Naive thymus-derived CD4-positive, alpha-beta T cell (primary cell): ENCODE measurements at regions of chr13 and their contacts with region 1.

Region 1: DNA sequence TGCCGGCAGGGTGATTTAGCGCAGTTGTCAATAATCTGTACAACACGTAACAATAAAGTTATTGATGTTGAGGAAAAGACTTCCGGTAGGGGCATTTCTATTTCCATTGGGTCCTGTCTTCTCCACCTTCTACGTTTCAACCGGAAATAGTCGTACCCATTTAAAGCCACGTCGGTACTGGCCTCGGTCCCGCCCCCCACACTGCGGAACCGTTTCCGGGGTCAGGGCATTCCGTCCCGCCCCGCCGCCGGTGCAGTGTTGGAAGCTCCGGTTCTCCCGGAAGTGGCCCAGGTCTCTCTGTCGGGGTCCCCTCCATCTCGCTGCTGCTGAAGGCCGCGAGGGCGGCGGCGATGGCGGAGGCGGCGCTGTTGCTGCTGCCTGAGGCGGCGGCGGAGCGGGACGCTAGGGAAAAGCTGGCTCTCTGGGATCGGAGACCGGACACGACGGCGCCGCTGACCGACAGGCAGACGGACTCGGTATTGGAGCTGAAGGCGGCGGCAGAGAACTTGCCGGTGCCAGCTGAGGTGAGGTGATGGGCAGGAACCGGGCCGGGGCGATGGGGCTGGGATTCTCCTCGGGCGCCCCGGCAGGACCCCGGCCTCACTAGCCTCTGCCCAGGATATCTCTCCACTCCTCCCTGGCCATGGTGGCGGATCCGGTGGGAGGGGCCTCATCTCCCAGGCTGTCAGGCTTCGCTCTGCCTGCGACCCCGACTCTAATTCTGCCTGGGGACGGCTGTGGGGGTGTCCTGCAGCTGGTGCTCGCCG is at the start of gene COG3:
- DNase-seq: peak; percentile 87 to 97 (median 96)
- ATAC-seq: peak; percentile 98
- H3K4me3 ChIP-seq: peak within 1 kb of the TSS; percentile 49
- H3K4me3 Mint-ChIP-seq: peak within 1 kb of the TSS; percentile 90 to 97 (median 95)
- H3K27ac ChIP-seq: peak within 1 kb of the TSS; percentile 92
- H3K27ac Mint-ChIP-seq: peak within 1 kb of the TSS; percentile 81 to 98 (median 94)
- H3K4me1 ChIP-seq: peaks cover 10 to 28% of the 10 kb centered on the region in 2 donors
- H3K4me1 Mint-ChIP-seq: peaks cover 33 to 74% (median 59%) of the 10 kb centered on the region in 7 donors
- H3K27me3 ChIP-seq: no peaks in the 10 kb centered on the region
- H3K27me3 Mint-ChIP-seq: no peaks in the 10 kb centered on the region
- total RNA-seq, gene COG3: 29.7 to 50.1 (median 43.4) TPM

Region 2: GRCh38 chr13:44988973-44989817 is 475.7 kb before region 1 on chr13 and contains the starts of genes GPALPP1 and NUFIP1:
- CTCF ChIA-PET with region 1: no interaction called
- POLR2A ChIA-PET with region 1: no interaction called
- intact Hi-C with region 1: loop called (anchors 1 to 2 kb)
- DNase-seq: peak; percentile 79 to 94 (median 90)
- ATAC-seq: peak; percentile 98
- H3K4me3 ChIP-seq: peak within 1 kb of the TSS; percentile 94
- H3K4me3 Mint-ChIP-seq: peak within 1 kb of the TSS; percentile 96 to 100 (median 98)
- H3K27ac ChIP-seq: peak within 1 kb of the TSS; percentile 95
- H3K27ac Mint-ChIP-seq: peak within 1 kb of the TSS; percentile 91 to 99 (median 98)
- H3K4me1 ChIP-seq: peaks cover 18 to 27% of the 10 kb centered on the region in 2 donors
- H3K4me1 Mint-ChIP-seq: peaks cover 42 to 81% (median 68%) of the 10 kb centered on the region in 7 donors
- H3K27me3 ChIP-seq: no peaks in the 10 kb centered on the region
- H3K27me3 Mint-ChIP-seq: no peaks in the 10 kb centered on the region
- total RNA-seq, gene GPALPP1: 29.7 to 43.1 (median 33.0) TPM
- total RNA-seq, gene NUFIP1: 3.7 to 6.6 (median 5.4) TPM

Region 3: DNA sequence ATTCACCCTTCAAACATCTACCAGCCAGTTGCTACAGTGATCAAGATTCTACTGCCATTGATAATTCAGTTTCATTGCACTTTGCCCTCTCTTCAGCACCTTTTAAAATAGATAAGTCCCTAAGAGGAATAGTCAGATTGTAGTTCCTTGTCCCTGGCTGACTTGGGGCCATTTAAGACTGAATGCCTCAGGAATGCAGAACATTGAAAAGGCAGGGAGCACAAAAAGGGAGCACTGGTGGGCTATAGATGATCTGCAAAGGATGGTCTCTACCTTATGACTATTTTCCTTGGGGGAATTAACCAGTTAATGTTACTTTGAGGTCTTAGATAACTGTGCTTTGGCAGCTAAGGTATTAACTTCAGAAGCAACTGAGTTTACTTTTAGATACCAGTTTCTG is 428.7 kb before region 1 on chr13:
- CTCF ChIA-PET with region 1: no interaction called
- POLR2A ChIA-PET with region 1: no interaction called
- intact Hi-C with region 1: no loop called
- DNase-seq: no peak
- ATAC-seq: no peak
- H3K4me3 ChIP-seq: no peak overlapping the region
- H3K4me3 Mint-ChIP-seq: no peak overlapping the region
- H3K27ac ChIP-seq: no peak overlapping the region
- H3K27ac Mint-ChIP-seq: no peak overlapping the region
- H3K4me1 ChIP-seq: no peaks in the 10 kb centered on the region
- H3K4me1 Mint-ChIP-seq: no peaks in the 10 kb centered on the region
- H3K27me3 ChIP-seq: no peaks in the 10 kb centered on the region
- H3K27me3 Mint-ChIP-seq: no peaks in the 10 kb centered on the region

Region 4: GRCh38 chr13:45340926-45341750 is 123.7 kb before region 1 on chr13 and contains the start of gene TPT1:
- CTCF ChIA-PET with region 1: interaction called, 3 read pairs
- POLR2A ChIA-PET with region 1: interaction called, 13 read pairs
- intact Hi-C with region 1: loop called (anchors 1 kb)
- DNase-seq: peak; percentile 99 to 100 (median 99)
- ATAC-seq: peak; percentile 91
- H3K4me3 ChIP-seq: peak within 1 kb of the TSS; percentile 94
- H3K4me3 Mint-ChIP-seq: peak within 1 kb of the TSS; percentile 95 to 100 (median 98)
- H3K27ac ChIP-seq: peak within 1 kb of the TSS; percentile 99
- H3K27ac Mint-ChIP-seq: peak within 1 kb of the TSS; percentile 92 to 100 (median 99)
- H3K4me1 ChIP-seq: peaks cover 35 to 43% of the 10 kb centered on the region in 2 donors
- H3K4me1 Mint-ChIP-seq: peaks cover 35 to 70% (median 57%) of the 10 kb centered on the region in 7 donors
- H3K27me3 ChIP-seq: no peaks in the 10 kb centered on the region
- H3K27me3 Mint-ChIP-seq: no peaks in the 10 kb centered on the region
- total RNA-seq, gene TPT1: 4,230 to 13,134 (median 7,796) TPM

Region 5: GRCh38 chr13:45393941-45394570 is 70.8 kb before region 1 on chr13:
- CTCF ChIA-PET with region 1: interaction called, 5 read pairs
- POLR2A ChIA-PET with region 1: interaction called, 3 read pairs
- intact Hi-C with region 1: loop called (anchors 1 kb)
- DNase-seq: peak in 1 of 9 donors; percentile 33
- ATAC-seq: peak; percentile 52
- H3K4me3 ChIP-seq: no peak overlapping the region
- H3K4me3 Mint-ChIP-seq: no peak overlapping the region
- H3K27ac ChIP-seq: no peak overlapping the region
- H3K27ac Mint-ChIP-seq: peak overlapping the region in 8 of 9 donors; percentile 16 to 95 (median 72)
- H3K4me1 ChIP-seq: peaks cover 10 to 20% of the 10 kb centered on the region in 2 donors
- H3K4me1 Mint-ChIP-seq: peaks cover 30 to 49% (median 48%) of the 10 kb centered on the region in 7 donors
- H3K27me3 ChIP-seq: no peaks in the 10 kb centered on the region
- H3K27me3 Mint-ChIP-seq: no peaks in the 10 kb centered on the region

Region 6: DNA sequence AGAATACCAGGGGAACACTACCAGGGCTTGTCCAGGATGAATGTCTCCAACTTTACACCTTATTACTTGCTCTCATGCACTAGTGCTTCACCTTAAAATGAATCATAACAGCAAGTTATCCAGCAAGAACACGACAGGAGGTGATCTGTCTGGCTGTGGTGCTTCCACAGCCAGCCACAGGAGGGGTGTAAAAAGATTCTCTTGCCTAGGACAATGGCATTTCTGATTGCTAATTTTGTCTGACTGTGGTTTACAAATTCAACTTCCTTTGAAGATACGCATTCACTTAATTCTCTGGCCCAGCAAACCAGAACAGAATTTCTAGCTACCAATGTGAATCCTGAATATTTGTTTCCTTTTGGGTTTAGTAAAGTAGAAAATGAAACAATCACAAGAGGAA is 23.2 kb before region 1 on chr13:
- CTCF ChIA-PET with region 1: no interaction called
- POLR2A ChIA-PET with region 1: no interaction called
- intact Hi-C with region 1: loop called (anchors 1 to 2 kb)
- DNase-seq: no peak
- ATAC-seq: no peak
- H3K4me3 ChIP-seq: no peak overlapping the region
- H3K4me3 Mint-ChIP-seq: peak overlapping the region in 4 of 10 donors; percentile 6 to 22 (median 8)
- H3K27ac ChIP-seq: no peak overlapping the region
- H3K27ac Mint-ChIP-seq: peak overlapping the region in 3 of 9 donors; percentile 34 to 59 (median 53)
- H3K4me1 ChIP-seq: peaks cover 0 to 3% of the 10 kb centered on the region in 2 donors
- H3K4me1 Mint-ChIP-seq: peaks cover 5 to 14% (median 8%) of the 10 kb centered on the region in 7 donors
- H3K27me3 ChIP-seq: no peaks in the 10 kb centered on the region
- H3K27me3 Mint-ChIP-seq: peaks cover 0 to 10% (median 0%) of the 10 kb centered on the region in 5 donors

Region 7: DNA sequence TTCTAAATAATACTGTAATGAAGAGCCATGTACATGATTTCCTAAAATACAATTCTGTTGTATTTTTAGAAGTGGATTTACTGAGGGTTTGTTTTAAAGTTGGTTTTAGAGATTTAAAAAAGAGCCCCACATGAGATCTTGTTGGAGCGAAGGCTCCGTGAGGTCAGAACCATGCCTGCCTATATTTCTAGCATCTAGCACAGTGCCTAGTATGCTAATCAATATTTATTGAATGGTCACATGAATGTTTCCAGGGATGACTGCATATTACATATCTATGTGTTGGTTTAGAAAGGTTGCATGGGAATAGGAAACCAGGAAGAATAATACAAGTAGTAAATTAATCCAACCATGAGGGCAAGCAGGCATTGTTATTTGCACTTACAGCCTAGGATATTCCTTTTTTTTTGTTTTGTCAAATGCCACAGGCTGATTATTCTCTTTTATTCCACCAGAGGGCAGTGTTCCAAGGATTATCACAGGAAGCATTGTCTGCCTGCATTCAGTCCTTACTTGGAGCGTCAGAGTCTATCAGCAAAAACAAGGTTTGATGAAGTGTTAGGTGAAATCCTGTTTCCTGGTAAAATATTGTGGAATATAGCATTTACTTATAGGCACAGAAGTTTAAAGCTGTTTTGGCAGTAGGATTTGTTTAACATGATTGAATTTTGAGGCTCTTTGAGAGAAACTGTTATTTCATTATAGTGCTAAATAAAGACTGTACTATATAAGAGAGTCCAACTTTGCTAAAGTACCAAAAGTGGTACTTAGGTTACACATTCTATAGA is 46.6 kb after region 1 on chr13:
- CTCF ChIA-PET with region 1: no interaction called
- POLR2A ChIA-PET with region 1: interaction called, 3 read pairs
- intact Hi-C with region 1: loop called in 1 of 2 experiments (anchors 1 kb)
- DNase-seq: peak in 7 of 9 donors; percentile 41 to 72 (median 63)
- ATAC-seq: peak; percentile 95
- H3K4me3 ChIP-seq: no peak overlapping the region
- H3K4me3 Mint-ChIP-seq: no peak overlapping the region
- H3K27ac ChIP-seq: no peak overlapping the region
- H3K27ac Mint-ChIP-seq: peak overlapping the region in 7 of 9 donors; percentile 22 to 60 (median 46)
- H3K4me1 ChIP-seq: no peaks in the 10 kb centered on the region
- H3K4me1 Mint-ChIP-seq: peaks cover 3 to 7% (median 5%) of the 10 kb centered on the region in 7 donors
- H3K27me3 ChIP-seq: no peaks in the 10 kb centered on the region
- H3K27me3 Mint-ChIP-seq: no peaks in the 10 kb centered on the region

Region 8: GRCh38 chr13:47372742-47373141 is 1907.9 kb after region 1 on chr13:
- CTCF ChIA-PET with region 1: no interaction called
- POLR2A ChIA-PET with region 1: no interaction called
- intact Hi-C with region 1: no loop called
- DNase-seq: no peak
- ATAC-seq: no peak
- H3K4me3 ChIP-seq: no peak overlapping the region
- H3K4me3 Mint-ChIP-seq: no peak overlapping the region
- H3K27ac ChIP-seq: no peak overlapping the region
- H3K27ac Mint-ChIP-seq: no peak overlapping the region
- H3K4me1 ChIP-seq: no peaks in the 10 kb centered on the region
- H3K4me1 Mint-ChIP-seq: no peaks in the 10 kb centered on the region
- H3K27me3 ChIP-seq: no peaks in the 10 kb centered on the region
- H3K27me3 Mint-ChIP-seq: no peaks in the 10 kb centered on the region